Cardiac septum (tissue), 1 donor: ENCODE measurements at regions of chr1 and their contacts with region 1.

Region 1: GRCh38 chr1:61491497-61491896 is 233.4 kb downstream of the TM2D1 start:
- DNase-seq: no peak

Region 2: DNA sequence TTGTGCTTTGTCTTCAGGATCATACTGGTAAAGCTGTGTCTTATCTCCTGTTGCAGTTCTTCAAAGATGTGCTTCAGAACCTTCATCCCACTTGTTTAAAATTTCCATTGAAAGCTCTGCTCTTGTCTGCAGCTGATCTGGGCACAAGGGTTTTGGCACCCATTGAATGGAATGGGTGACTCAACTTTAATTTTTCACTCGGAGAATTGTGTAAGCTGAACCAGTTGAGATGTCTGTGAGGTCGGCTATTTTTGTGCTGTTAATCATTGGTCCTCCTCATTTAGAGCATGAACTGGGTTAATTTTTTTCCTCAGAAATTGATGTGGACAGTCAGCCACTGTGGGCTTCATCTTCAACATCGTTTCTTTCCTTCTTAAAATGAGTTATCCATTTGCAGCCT is 18.6 kb before region 1 on chr1:
- intact Hi-C with region 1: no loop called
- DNase-seq: no peak

Region 3: DNA sequence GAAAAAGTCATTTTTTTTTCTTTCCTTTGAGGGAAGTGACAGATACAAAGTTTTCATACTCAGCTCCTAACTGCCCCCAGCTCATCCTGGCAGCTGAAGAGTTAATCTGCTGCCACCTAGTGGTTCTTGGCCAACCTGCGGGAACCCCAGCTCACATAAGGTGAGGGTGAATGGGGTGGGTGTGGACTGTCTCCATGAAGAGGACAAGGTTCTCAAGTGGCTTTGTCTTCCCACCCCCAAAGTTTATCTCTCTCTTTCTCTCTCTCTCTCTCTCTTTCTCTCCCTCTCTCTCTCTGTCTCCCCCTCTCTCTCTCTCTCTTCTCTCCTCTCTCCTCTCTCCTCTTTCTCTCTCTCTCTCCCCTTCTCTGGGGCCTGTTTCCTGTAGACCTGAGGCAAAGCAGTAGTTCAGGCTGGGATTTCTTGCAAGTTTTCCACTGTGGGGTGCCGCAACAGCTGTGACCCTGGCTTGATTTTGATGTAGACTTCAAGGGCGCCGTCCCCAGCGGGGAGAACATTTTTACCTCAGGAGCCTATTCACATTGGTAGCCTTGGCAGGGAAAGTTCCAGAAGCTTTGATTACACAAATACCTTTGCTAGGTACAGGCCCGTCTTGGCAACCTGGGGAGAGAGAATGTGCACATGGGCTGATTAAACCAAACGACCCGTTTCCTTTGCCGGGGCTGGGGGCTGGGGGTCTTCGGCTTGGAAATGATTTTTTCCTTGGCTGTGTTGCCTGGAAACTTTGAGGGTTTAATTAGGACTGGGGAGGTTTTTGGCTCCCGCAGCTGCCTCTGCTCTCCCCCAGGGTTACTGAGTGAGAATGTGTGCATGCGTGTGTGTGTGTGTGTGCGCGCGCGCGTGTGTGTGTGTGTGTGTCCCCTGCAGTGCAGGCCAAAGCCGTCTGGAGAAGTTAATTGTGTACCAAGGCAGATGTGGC is 97.5 kb after region 1 on chr1:
- intact Hi-C with region 1: loop called (anchors 5 kb)
- DNase-seq: no peak